Right ventricle myocardium superior (tissue), 1 donor: ENCODE measurements at regions of chr18 and their contacts with region 1.

Region 1: DNA sequence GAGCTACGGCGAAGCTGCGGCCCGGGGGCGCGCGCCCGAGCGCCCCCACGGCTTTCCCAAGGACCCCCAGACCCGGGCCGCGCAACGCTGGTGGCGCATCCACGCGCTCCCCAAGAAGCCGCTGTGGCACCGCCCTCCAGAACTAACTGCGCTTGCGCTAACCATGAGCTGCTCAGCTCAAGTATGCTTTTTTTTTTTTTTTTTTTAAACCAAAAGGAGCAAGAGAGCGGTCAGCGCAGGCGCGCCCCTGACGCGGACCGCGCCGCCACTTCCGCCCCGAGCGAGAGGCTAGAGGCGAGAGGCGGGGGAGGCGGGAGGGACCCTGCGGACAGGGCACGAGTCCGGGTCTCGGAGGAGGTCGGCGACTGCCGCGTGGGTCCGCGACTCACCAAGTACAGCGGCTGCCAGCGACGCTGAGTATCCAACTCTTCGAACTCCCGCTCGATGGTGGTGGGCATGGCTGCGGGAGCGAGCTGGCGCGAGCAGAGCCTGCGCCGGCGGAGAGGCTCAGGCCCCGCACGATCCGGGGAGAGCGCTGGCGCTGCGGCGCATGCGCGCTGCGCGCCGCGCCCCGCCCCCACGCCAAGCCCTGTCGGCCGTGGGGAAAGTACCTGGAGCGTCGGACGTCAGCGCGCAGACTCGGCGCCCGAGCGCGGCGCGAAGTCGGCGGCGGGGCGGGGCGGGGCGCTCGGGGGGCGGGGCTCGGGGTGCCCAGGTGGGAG is at the start of gene PTPN2:
- DNase-seq: peak; percentile 97
- ATAC-seq: peak; percentile 97
- total RNA-seq, gene PTPN2: 9.5 TPM

Region 2: GRCh38 chr18:11808001-11808855 is 1075.6 kb before region 1 on chr18:
- intact Hi-C with region 1: no loop called
- DNase-seq: no peak
- ATAC-seq: no peak

Region 3: GRCh38 chr18:12947355-12948041 is 63.7 kb after region 1 on chr18 and contains the start of gene SEH1L:
- intact Hi-C with region 1: loop called (anchors 2 kb)
- DNase-seq: peak; percentile 100
- ATAC-seq: peak; percentile 97
- total RNA-seq, gene SEH1L: 17.3 TPM